Activated CD4-positive, alpha-beta T cell treated with anti-CD3 and anti-CD28 coated beads for 36 hours (primary cell): ENCODE measurements at regions of chr17 and their contacts with region 1.

Region 1: GRCh38 chr17:36486204-36487194 is at the start of gene ZNHIT3:
- DNase-seq: peak; percentile 95
- ATAC-seq: peak; percentile 94
- H3K4me3 Mint-ChIP-seq: peak within 1 kb of the TSS; percentile 84
- H3K27ac Mint-ChIP-seq: peak within 1 kb of the TSS; percentile 96
- H3K4me1 Mint-ChIP-seq: peaks cover 50% of the 10 kb centered on the region
- H3K27me3 Mint-ChIP-seq: peaks cover 10% of the 10 kb centered on the region
- total RNA-seq, gene ZNHIT3: 38.2 to 42.3 TPM

Region 2: GRCh38 chr17:35743626-35744328 is 742.7 kb before region 1 on chr17:
- CTCF ChIA-PET with region 1: no interaction called
- POLR2A ChIA-PET with region 1: no interaction called
- intact Hi-C with region 1: no loop called
- DNase-seq: peak; percentile 54
- ATAC-seq: no peak
- H3K4me3 Mint-ChIP-seq: no peak overlapping the region
- H3K27ac Mint-ChIP-seq: no peak overlapping the region
- H3K4me1 Mint-ChIP-seq: peaks cover 15% of the 10 kb centered on the region
- H3K27me3 Mint-ChIP-seq: peaks cover 31% of the 10 kb centered on the region

Region 3: DNA sequence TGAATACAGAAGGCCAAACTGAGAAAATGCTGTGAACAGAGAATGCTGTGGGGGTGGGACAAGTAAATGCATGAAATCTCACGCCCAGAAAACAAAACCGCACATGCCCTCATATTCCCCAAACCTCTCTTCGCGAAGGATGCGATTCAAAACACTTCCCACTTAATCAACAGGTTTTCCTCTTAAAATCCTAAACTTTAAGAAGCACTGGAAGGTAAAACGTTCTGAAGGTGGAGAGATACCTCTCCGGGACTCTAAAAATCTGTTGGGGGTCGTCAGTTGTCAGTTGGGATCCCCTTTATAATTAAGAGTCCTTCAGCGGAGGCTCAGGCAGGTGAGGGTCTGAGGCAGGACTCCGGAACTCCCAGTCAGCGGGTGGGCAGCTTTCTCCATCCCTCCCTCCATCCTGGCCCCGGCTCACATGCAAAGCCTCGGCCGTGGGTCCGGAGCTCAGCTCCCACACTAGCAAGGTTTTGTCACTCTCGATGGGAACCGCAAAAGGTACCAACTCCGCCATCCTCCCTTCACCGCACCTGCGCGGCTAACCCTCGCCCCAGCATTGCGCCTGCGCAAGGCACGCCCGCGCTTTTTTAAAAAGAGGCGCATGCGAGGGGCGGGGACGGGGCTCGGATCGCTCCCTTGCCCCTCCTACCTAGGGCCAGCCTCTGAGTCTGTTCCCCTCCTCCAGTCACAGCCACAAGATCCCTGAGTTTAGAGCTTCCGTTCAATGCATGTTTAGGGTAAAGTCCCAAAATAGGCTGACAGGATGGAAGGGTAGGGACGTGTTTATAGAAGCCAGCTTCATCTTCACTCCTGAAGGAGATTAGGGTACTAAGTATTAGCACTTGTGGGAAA is 556.1 kb before region 1 on chr17 and contains the start of gene RDM1:
- CTCF ChIA-PET with region 1: no interaction called
- POLR2A ChIA-PET with region 1: no interaction called
- intact Hi-C with region 1: loop called in 1 of 2 experiments (anchors 1 kb)
- DNase-seq: peak; percentile 95
- ATAC-seq: peak; percentile 100
- H3K4me3 Mint-ChIP-seq: peak within 1 kb of the TSS; percentile 80
- H3K27ac Mint-ChIP-seq: peak within 1 kb of the TSS; percentile 62
- H3K4me1 Mint-ChIP-seq: peaks cover 22% of the 10 kb centered on the region
- H3K27me3 Mint-ChIP-seq: no peaks in the 10 kb centered on the region
- total RNA-seq, gene RDM1: 4.4 to 6.5 TPM

Region 4: GRCh38 chr17:36148559-36149295 is 337.8 kb before region 1 on chr17:
- CTCF ChIA-PET with region 1: no interaction called
- POLR2A ChIA-PET with region 1: no interaction called
- intact Hi-C with region 1: loop called in 1 of 2 experiments (anchors 10 kb)
- DNase-seq: peak; percentile 80
- ATAC-seq: peak; percentile 87
- H3K4me3 Mint-ChIP-seq: no peak overlapping the region
- H3K27ac Mint-ChIP-seq: no peak overlapping the region
- H3K4me1 Mint-ChIP-seq: peaks cover 3% of the 10 kb centered on the region
- H3K27me3 Mint-ChIP-seq: peaks cover 15% of the 10 kb centered on the region

Region 5: GRCh38 chr17:36722121-36722902 is 235.8 kb after region 1 on chr17:
- CTCF ChIA-PET with region 1: no interaction called
- POLR2A ChIA-PET with region 1: no interaction called
- intact Hi-C with region 1: loop called in 1 of 2 experiments (anchors 2 kb)
- DNase-seq: peak; percentile 91
- ATAC-seq: peak; percentile 94
- H3K4me3 Mint-ChIP-seq: peak overlapping the region; percentile 76
- H3K27ac Mint-ChIP-seq: peak overlapping the region; percentile 98
- H3K4me1 Mint-ChIP-seq: peaks cover 46% of the 10 kb centered on the region
- H3K27me3 Mint-ChIP-seq: no peaks in the 10 kb centered on the region